ENCODE measurements at regions of chr3 and their contacts with region 1.

Region 1: GRCh38 chr3:181709537-181710279 is 2.0 kb upstream of the SOX2 start:
- DNase-seq: no peak
- H3K4me3 ChIP-seq: no peak overlapping the region
- H3K27ac ChIP-seq: no peak overlapping the region
- H3K4me1 ChIP-seq: peaks cover 17 to 39% (median 35%) of the 10 kb centered on the region in 4 donors
- H3K27me3 ChIP-seq: peaks cover under 1 to 100% (median 85%) of the 10 kb centered on the region in 4 donors
- CTCF ChIP-seq: peak; percentile 64 to 80 (median 79)
- EP300 ChIP-seq: no peak
- POLR2A ChIP-seq: no peak

Region 2: DNA sequence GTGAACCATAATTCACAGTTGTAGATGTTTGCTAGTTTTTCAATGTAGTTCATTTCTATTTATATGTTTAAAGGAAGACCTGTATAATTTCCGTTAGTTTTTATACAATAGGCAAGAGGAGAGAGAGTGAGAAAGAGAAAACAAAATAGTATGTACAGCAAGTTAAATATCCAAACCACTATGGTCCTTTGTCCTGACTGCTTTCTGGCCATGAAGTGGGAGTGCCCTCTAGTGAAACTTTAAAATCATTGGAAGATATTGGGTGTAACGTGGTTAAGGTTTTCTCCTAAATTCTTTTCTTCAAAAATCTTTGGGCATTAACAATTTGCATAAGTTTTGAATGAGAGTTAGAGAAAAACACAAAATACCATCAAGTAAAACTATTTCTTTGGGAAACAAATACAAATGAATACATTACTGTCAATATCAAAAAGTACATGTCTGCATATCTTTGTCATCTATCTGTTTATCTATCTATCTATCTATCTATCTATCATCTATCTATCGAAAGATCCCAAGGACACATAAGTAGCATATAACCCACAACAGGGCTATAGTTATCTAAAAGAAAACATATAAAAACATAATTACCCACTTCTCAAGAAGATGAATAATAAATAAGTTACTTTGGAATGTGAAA is 549.0 kb after region 1 on chr3:
- intact Hi-C with region 1: loop called (anchors 5 kb)
- DNase-seq: no peak
- H3K4me3 ChIP-seq: no peak overlapping the region
- H3K27ac ChIP-seq: no peak overlapping the region
- H3K4me1 ChIP-seq: no peaks in the 10 kb centered on the region
- H3K27me3 ChIP-seq: peaks cover 0 to 18% (median 2%) of the 10 kb centered on the region in 4 donors
- CTCF ChIP-seq: peak in 2 of 3 experiments; percentile 23 to 45
- EP300 ChIP-seq: no peak
- POLR2A ChIP-seq: no peak

Region 3: DNA sequence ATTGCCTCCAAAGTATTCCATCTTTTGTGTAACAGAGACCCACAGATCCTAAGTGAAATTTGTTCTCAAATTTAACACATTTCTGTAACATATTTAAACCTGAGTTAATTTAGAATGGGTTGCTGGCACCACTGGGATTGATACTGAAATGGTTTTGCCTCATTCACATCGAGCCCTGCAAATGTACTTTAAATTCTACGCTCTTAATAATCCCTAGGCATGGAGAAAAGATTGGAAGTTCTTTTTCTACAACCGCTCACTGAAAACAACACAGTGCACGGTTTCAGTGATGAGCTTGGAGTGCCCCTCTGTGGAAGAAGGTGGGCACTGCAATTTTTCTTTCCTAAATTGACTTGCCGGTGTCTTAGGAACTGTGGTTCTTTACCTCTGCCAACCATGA is 973.7 kb after region 1 on chr3:
- intact Hi-C with region 1: loop called (anchors 2 kb)
- DNase-seq: no peak
- H3K4me3 ChIP-seq: peak overlapping the region; percentile 49 to 69 (median 57)
- H3K27ac ChIP-seq: no peak overlapping the region
- H3K4me1 ChIP-seq: peaks cover 9 to 16% (median 15%) of the 10 kb centered on the region in 4 donors
- H3K27me3 ChIP-seq: peaks cover 0 to 42% (median 2%) of the 10 kb centered on the region in 4 donors
- CTCF ChIP-seq: peak; percentile 79 to 91 (median 83)
- EP300 ChIP-seq: no peak
- POLR2A ChIP-seq: no peak